GM12878 (cell line): ENCODE measurements at regions of chr3 and their contacts with region 1.

Region 1: GRCh38 chr3:167750272-167750971 is 14.9 kb downstream of the SERPINI1 start:
- DNase-seq: peak; percentile 52
- ATAC-seq: peak; percentile 98
- H3K4me3 ChIP-seq: peak overlapping the region; percentile 36; the same call in 1 of the 2 replicates
- H3K27ac ChIP-seq: peak overlapping the region; percentile 19; the same call in 1 of the 2 replicates
- H3K4me1 ChIP-seq: peaks cover 23% of the 10 kb centered on the region
- H3K27me3 ChIP-seq: no peaks in the 10 kb centered on the region
- CTCF ChIP-seq: no peak
- EP300 ChIP-seq: peak in 1 of 2 experiments; percentile 73; a peak in 2 of 4 replicates
- POLR2A ChIP-seq: no peak
- RAD21 ChIP-seq: no peak

Region 2: DNA sequence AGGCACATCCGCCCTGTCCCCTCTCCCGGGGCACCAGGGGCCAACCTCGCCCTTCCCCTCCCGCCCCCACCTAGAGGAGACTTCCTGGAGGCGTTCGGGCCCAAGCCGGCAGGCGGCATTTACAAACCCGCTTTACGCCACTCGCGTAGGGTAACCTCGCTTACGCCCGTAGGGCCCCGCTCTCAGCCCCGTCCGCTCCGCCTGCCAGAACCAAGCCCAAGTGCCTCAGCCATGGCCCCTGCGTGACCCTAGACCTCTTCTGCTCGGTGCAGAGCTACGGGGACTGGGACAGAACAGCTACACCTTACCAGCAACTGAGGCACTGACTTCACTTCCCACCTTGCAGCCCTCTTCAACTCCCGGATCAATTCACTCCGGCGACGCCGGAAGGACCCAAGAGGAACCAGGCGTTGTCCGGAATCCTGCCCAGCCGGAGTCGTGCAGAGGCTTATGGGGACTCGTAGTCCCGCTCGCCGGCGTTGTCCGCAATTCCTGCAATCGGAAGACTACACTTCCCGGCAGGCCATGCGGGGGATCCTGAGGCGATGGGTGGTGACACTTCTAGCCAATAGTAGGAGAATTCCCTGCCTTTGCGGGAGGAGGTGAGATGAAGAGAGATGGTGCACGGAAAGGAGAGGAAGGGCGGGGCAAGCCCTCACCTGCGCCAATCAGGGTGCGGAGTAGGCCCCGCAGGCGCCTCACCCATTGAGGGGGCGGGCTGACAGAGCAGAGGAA is 15.8 kb before region 1 on chr3 and contains the start of gene PDCD10:
- CTCF ChIA-PET with region 1: interaction called, 19 read pairs
- POLR2A ChIA-PET with region 1: interaction called, 26 read pairs
- RAD21 ChIA-PET with region 1: interaction called, 6 read pairs
- SMC1A ChIA-PET with region 1: interaction called, 36 read pairs
- in situ Hi-C with region 1: no loop called
- intact Hi-C with region 1: no loop called
- DNase-seq: peak; percentile 98
- ATAC-seq: peak; percentile 91
- H3K4me3 ChIP-seq: peak within 1 kb of the TSS; percentile 97
- H3K27ac ChIP-seq: peak within 1 kb of the TSS; percentile 86
- H3K4me1 ChIP-seq: peaks cover 3% of the 10 kb centered on the region; the same call in 1 of the 2 replicates
- H3K27me3 ChIP-seq: no peaks in the 10 kb centered on the region
- CTCF ChIP-seq: 0 out of 6 replicates have a peak, but pooled peaks of 1 of the 3 experiments have one; percentile 7
- EP300 ChIP-seq: no peak
- POLR2A ChIP-seq: peak; percentile 85
- RAD21 ChIP-seq: no peak
- polyA plus RNA-seq, gene PDCD10: 199 to 247 TPM

Region 3: DNA sequence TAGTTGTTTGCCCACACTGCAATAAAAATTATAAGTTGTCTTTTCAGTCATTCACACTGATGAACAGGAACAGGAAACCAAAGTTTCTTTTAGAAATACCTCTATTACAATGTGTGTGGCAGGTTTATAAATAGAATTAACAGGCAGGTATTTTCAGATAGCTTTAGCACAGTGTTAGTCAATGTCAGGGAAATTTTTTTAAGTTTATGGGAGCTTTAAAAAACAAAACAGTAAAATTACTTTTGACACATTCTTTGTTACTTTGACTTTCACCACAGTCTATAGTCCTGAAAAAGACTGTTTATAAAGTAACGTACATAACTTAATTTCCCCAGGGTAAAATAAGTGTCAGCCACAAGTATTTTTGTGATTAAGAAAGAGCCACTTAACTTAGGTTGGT is 23.2 kb after region 1 on chr3:
- CTCF ChIA-PET with region 1: interaction called, 6 read pairs
- POLR2A ChIA-PET with region 1: interaction called, 3 read pairs
- RAD21 ChIA-PET with region 1: interaction called, 13 read pairs
- SMC1A ChIA-PET with region 1: interaction called, 19 read pairs
- in situ Hi-C with region 1: no loop called
- intact Hi-C with region 1: no loop called
- DNase-seq: peak; percentile 13
- ATAC-seq: peak; percentile 86
- H3K4me3 ChIP-seq: no peak overlapping the region
- H3K27ac ChIP-seq: no peak overlapping the region
- H3K4me1 ChIP-seq: peaks cover 8% of the 10 kb centered on the region
- H3K27me3 ChIP-seq: no peaks in the 10 kb centered on the region
- CTCF ChIP-seq: no peak
- EP300 ChIP-seq: peak in 1 of 2 experiments; percentile 20; a peak in 1 of 4 replicates
- POLR2A ChIP-seq: no peak
- RAD21 ChIP-seq: no peak

Region 4: GRCh38 chr3:167783781-167784180 is 33.4 kb after region 1 on chr3:
- CTCF ChIA-PET with region 1: no interaction called
- POLR2A ChIA-PET with region 1: no interaction called
- RAD21 ChIA-PET with region 1: no interaction called
- SMC1A ChIA-PET with region 1: no interaction called
- in situ Hi-C with region 1: no loop called
- intact Hi-C with region 1: no loop called
- DNase-seq: no peak
- ATAC-seq: no peak
- H3K4me3 ChIP-seq: no peak overlapping the region
- H3K27ac ChIP-seq: no peak overlapping the region
- H3K4me1 ChIP-seq: no peaks in the 10 kb centered on the region
- H3K27me3 ChIP-seq: no peaks in the 10 kb centered on the region; a peak in 1 of 4 replicates
- CTCF ChIP-seq: no peak
- EP300 ChIP-seq: no peak
- POLR2A ChIP-seq: no peak
- RAD21 ChIP-seq: no peak